Ovary (tissue), 10 donors: ENCODE measurements at regions of chrX and their contacts with region 1.

Region 1: GRCh38 chrX:103520386-103520785 is 1.1 kb upstream of the RAB40A start:
- DNase-seq: no peak
- H3K4me3 ChIP-seq: no peak overlapping the region
- H3K27ac ChIP-seq: no peak overlapping the region
- H3K4me1 ChIP-seq: no peaks in the 10 kb centered on the region
- H3K27me3 ChIP-seq: no peaks in the 10 kb centered on the region
- CTCF ChIP-seq: no peak
- EP300 ChIP-seq: no peak
- POLR2A ChIP-seq: no peak

Region 2: DNA sequence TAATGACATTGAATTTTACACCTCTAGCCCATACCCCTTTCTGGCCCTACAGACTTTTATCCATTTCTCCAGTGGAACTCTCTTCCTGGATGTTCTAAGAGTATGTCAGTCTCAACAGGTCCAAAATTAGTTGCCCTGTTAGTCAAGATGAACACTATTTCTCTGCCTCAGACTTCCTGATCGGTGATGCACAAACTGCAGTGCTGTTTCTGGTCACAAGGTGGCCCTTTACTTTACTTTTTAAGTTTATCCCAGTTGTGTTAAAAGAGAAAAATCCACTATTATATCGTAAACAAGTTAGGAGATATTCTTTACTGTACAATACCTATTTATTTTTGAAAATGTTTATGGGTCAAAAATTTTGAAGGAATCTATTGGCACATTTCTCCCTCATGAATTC is 177.3 kb before region 1 on chrX:
- intact Hi-C with region 1: no loop called
- DNase-seq: peak in 4 of 5 donors; percentile 41 to 77 (median 58)
- H3K4me3 ChIP-seq: no peak overlapping the region
- H3K27ac ChIP-seq: no peak overlapping the region
- H3K4me1 ChIP-seq: no peaks in the 10 kb centered on the region
- H3K27me3 ChIP-seq: no peaks in the 10 kb centered on the region
- CTCF ChIP-seq: peak; percentile 15 to 72 (median 62)
- EP300 ChIP-seq: no peak
- POLR2A ChIP-seq: no peak

Region 3: DNA sequence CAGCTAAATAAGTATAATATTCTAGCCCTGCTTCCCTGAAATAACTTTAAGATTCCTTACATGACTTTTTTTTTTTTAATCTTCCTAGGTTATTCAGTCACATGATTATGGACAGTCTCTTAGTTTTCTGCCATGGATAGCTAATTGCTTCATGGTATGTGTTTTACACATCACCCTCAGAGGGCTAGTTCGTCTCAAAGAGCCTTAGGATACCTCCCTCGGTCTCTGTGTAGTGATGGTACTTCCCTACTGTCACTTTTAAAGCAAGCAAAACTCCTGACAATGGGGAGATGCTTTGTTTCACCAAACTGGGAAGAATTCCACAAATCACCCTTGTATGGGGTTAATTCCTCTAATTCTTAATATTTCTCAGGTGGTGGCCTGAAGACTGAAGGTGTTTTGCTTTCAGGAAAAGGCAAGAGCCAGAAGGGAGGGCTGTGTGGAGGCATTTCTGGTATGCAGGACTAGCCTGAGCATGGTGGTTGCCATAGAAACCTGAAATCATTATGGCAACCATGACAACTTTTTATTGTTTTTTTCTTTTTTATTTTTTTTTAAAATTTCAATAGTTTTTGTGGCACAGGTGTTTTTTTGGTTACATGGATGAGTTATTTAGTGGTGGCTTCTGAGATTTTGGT is 73.6 kb before region 1 on chrX:
- intact Hi-C with region 1: no loop called
- DNase-seq: no peak
- H3K4me3 ChIP-seq: no peak overlapping the region
- H3K27ac ChIP-seq: no peak overlapping the region
- H3K4me1 ChIP-seq: no peaks in the 10 kb centered on the region
- H3K27me3 ChIP-seq: no peaks in the 10 kb centered on the region
- CTCF ChIP-seq: no peak
- EP300 ChIP-seq: no peak
- POLR2A ChIP-seq: no peak

Region 4: DNA sequence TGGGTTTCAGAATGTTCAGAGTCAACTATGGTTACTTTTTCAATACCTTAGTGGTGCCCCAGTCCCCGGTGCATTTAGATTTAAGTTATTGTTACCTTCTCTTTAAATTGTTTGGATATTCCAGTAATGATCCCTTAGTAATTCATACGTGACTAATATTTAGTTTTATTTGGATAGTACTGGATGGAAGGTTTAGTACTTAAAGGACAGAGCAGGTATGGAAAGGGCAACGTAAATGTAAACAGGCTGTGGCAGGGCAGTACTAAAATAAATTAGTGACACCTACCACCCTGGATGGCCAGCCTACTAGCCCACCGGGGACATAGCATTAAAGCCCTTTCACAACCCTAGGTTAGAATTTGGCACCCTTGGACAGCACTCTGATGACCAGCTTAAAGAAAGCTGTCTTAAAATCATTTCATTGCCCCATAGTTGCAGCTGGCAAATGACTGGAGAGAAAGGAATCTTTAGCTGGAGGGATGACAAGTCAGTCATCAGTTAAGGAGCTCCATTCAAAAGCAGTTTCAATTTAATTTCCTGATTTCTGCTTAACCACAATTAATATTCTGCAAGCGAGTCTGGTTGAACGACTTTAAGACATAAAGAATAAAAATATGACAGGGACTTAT is 272.6 kb after region 1 on chrX:
- intact Hi-C with region 1: loop called in 1 of 4 experiments (anchors 10 kb)
- DNase-seq: no peak
- H3K4me3 ChIP-seq: no peak overlapping the region
- H3K27ac ChIP-seq: no peak overlapping the region
- H3K4me1 ChIP-seq: no peaks in the 10 kb centered on the region
- H3K27me3 ChIP-seq: no peaks in the 10 kb centered on the region
- CTCF ChIP-seq: no peak
- EP300 ChIP-seq: no peak
- POLR2A ChIP-seq: no peak